Calu3 (cell line): ENCODE measurements at regions of chr11 and their contacts with region 1.

Region 1: DNA sequence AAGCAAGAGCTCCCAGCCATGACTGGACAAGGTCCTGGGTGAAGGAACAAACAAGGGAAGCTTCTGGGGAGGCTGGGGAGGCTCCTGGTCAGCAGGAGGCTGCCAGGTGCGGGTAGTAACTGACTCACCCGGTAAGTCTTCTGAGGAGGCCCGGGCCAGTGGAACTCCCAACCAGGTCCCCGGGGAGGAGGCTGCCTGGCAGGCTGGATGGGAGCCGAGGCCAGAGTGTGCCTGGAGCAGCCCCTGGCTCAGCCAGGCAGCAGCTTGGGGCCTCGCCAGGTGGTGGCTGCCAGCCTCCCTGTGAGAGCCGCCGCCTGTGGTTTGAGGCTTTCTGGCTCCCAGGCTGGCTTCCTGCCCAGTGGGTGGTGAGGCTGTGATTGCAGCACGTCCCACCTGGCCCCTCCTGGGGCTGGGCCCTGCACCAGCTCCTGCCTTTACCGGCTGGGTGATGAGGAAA is 46.2 kb downstream of the IGF2 start:
- DNase-seq: peak; percentile 94
- H3K4me3 Mint-ChIP-seq: no peak overlapping the region
- H3K27ac Mint-ChIP-seq: no peak overlapping the region
- H3K4me1 Mint-ChIP-seq: peaks cover 16% of the 10 kb centered on the region
- H3K27me3 Mint-ChIP-seq: peaks cover 12% of the 10 kb centered on the region
- CTCF ChIP-seq: no peak

Region 2: GRCh38 chr11:1669661-1670218 is 423.2 kb before region 1 on chr11:
- CTCF ChIA-PET with region 1: no interaction called
- intact Hi-C with region 1: no loop called
- DNase-seq: no peak
- H3K4me3 Mint-ChIP-seq: no peak overlapping the region
- H3K27ac Mint-ChIP-seq: no peak overlapping the region
- H3K4me1 Mint-ChIP-seq: no peaks in the 10 kb centered on the region
- H3K27me3 Mint-ChIP-seq: peaks cover 85% of the 10 kb centered on the region
- CTCF ChIP-seq: no peak

Region 3: DNA sequence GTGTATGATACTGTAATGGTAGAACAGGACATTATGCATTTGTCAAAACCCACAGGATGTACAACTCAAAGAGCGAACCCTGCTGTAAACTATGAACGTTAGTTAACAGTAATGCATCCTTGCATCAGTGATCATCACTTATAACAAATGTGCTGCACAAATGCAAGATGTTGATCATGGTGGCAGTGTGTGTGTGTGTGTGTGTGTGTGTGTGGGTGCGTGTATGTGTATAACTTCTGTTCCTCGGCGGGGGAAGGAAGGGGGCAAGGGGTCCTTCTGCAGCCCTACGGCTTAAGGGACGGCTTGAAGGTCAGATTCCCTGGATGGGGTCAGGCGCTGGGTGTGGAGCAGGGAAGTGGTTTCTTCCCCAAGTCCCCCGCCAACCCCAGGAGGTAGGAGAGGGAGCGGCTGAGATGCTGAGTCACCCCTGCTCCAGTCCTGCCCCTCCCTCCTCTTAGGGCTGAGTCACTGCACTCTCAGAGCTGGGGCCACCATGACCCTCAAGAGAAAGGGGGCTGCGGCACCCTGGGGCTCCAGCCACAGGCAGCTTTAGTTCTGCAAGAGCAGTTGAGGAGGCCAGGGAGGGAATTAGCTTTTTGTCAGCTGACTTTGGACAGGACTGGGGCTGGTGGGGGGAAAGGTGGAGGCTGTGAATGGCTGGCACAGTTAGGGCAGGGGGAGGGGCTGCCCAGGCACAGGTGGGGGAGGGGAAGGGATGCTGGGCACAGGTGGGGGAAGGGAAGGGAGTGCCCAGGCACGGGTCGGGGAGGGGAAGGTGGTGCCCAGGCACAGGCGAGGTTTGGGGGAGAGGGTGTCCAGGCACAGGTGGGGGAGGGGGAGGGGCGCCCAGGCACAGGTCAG is 320.5 kb before region 1 on chr11:
- CTCF ChIA-PET with region 1: no interaction called
- intact Hi-C with region 1: no loop called
- DNase-seq: peak; percentile 83
- H3K4me3 Mint-ChIP-seq: peak overlapping the region; percentile 55
- H3K27ac Mint-ChIP-seq: peak overlapping the region; percentile 91
- H3K4me1 Mint-ChIP-seq: peaks cover 68% of the 10 kb centered on the region
- H3K27me3 Mint-ChIP-seq: no peaks in the 10 kb centered on the region
- CTCF ChIP-seq: no peak

Region 4: GRCh38 chr11:1908618-1909017 is 184.4 kb before region 1 on chr11:
- CTCF ChIA-PET with region 1: no interaction called
- intact Hi-C with region 1: loop called (anchors 5 kb)
- DNase-seq: no peak
- H3K4me3 Mint-ChIP-seq: no peak overlapping the region
- H3K27ac Mint-ChIP-seq: no peak overlapping the region
- H3K4me1 Mint-ChIP-seq: no peaks in the 10 kb centered on the region
- H3K27me3 Mint-ChIP-seq: peaks cover 79% of the 10 kb centered on the region
- CTCF ChIP-seq: no peak